ENCODE measurements at regions of chr15 and their contacts with region 1.

Region 1: GRCh38 chr15:66883322-66883911 is 181.4 kb downstream of the SMAD6 start:
- DNase-seq: peak; percentile 91
- H3K4me3 Mint-ChIP-seq: peak overlapping the region; percentile 25
- H3K27ac Mint-ChIP-seq: peak overlapping the region; percentile 88
- H3K4me1 Mint-ChIP-seq: peaks cover 37% of the 10 kb centered on the region
- H3K27me3 Mint-ChIP-seq: no peaks in the 10 kb centered on the region
- CTCF ChIP-seq: no peak

Region 2: DNA sequence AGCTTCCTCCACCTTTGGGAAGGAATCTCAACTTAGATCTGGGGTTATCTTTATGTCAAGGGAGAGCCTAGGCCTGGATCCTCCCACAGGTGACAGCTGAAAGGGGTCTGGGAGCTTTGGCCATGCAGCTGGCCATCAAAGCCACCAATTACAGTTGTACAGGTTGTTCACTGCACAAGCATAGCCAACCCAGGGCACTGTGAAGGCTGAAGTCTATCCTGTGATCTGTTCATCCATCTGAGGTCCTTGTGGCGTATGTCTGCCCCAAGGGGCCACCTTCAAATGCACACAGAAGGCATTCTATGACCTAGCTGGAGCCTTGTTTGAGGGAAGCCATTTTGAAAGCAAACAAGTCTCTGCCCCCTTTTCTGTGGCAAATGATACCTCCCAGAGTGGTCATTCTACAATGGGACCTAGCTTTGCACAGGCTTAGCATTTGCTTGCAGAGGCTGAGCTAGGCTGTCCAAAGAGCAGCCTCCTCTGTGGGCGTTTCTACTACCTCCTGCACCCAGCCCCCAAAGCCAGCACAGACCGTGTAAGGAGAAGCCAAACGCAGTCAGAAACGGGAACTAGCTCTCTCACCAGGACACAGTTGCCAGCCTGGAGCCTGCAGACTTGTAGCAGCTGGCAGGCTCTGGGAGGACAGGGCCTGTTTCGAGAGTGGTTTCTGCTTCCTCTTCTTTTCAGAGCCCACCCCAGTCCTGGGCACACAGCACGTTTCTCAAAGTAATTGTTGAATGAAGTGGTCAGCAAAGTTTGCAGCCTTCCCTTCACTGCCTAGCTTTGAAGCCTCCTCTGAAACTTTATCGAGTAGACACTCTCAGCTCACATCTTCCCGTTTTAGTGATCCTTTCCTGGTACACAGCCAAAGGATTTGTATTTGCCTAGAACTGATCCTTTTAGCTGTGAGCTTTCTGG is 24.7 kb after region 1 on chr15:
- CTCF ChIA-PET with region 1: interaction called, 8 read pairs
- intact Hi-C with region 1: loop called (anchors 1 kb)
- DNase-seq: no peak
- H3K4me3 Mint-ChIP-seq: no peak overlapping the region
- H3K27ac Mint-ChIP-seq: no peak overlapping the region
- H3K4me1 Mint-ChIP-seq: peaks cover 8% of the 10 kb centered on the region
- H3K27me3 Mint-ChIP-seq: no peaks in the 10 kb centered on the region
- CTCF ChIP-seq: no peak

Measured in Calu3 (cell line).